HEK293 (cell line): ENCODE measurements at regions of chr12 and their contacts with region 1.

Region 1: DNA sequence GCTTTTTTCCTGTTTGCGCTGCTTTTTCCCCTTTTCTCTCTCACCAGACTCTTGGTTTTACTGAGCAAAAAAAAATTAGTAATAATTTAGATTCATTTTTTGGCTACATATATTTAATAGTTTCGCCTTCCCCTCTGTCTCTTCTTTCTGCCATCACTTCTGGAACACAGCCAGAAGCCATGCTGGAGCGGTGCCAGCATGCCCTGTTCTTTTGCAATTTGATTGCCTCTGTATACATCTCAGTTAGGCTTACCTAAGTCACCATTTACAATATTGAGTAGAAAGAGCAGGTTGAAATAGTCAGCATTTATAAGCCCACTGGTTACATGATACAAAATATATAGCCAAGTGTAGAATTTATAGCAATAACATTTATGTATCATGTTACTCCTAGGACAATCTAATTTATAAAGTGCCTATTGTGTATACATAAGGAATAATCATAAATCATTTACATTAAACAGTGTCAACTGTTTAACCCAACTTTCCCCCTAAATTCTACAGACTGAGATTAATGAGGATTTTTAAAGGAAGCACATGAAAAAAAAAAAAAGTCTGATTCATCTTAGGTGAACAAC is 413.8 kb upstream of the SOX5 start:
- H3K4me3 ChIP-seq: no peak overlapping the region
- H3K27ac ChIP-seq: no peak overlapping the region
- H3K4me1 ChIP-seq: peaks cover 17% of the 10 kb centered on the region
- CTCF ChIP-seq: no peak

Region 2: DNA sequence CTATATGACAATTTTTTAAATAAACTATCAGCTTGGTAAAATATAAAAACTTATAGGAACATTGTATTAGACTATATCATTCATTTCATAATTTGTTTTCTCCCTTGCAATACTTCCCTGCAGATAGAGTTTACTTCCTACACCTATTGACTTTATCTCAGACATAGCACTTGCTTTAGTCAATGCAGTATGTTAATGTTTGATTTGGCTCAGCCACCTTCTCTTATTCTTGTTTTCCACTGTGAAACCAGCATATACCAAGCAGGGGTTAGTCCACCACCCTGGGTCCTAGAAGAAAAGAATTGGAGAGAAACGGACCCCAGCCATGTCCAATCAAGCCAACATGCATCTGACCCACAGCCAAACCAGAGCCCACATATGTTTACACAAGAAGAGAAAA is 403.4 kb before region 1 on chr12:
- CTCF ChIA-PET with region 1: interaction called, 10 read pairs
- POLR2A ChIA-PET with region 1: no interaction called
- H3K4me3 ChIP-seq: no peak overlapping the region
- H3K27ac ChIP-seq: no peak overlapping the region
- H3K4me1 ChIP-seq: no peaks in the 10 kb centered on the region
- CTCF ChIP-seq: no peak

Region 3: GRCh38 chr12:24414480-24414879 is 51.2 kb after region 1 on chr12:
- CTCF ChIA-PET with region 1: no interaction called
- POLR2A ChIA-PET with region 1: no interaction called
- H3K4me3 ChIP-seq: no peak overlapping the region
- H3K27ac ChIP-seq: no peak overlapping the region
- H3K4me1 ChIP-seq: no peaks in the 10 kb centered on the region
- CTCF ChIP-seq: no peak